ENCODE measurements at regions of chr7 and their contacts with region 1.

Region 1: GRCh38 chr7:87506246-87507180 is 31.0 kb upstream of the ABCB4 start:
- DNase-seq: peak; percentile 5
- H3K4me3 ChIP-seq: no peak overlapping the region
- H3K27ac ChIP-seq: no peak overlapping the region
- H3K4me1 ChIP-seq: no peaks in the 10 kb centered on the region
- H3K27me3 ChIP-seq: peaks cover 2% of the 10 kb centered on the region
- CTCF ChIP-seq: peak; percentile 54 to 58

Region 2: GRCh38 chr7:87411186-87411585 is 95.3 kb before region 1 on chr7:
- CTCF ChIA-PET with region 1: no interaction called
- dilution Hi-C with region 1: no loop called
- in situ Hi-C with region 1: no loop called
- intact Hi-C with region 1: no loop called
- DNase-seq: no peak
- H3K4me3 ChIP-seq: no peak overlapping the region
- H3K27ac ChIP-seq: no peak overlapping the region
- H3K4me1 ChIP-seq: no peaks in the 10 kb centered on the region
- H3K27me3 ChIP-seq: no peaks in the 10 kb centered on the region
- CTCF ChIP-seq: no peak

Region 3: GRCh38 chr7:87608443-87608842 is 101.9 kb after region 1 on chr7:
- CTCF ChIA-PET with region 1: no interaction called
- dilution Hi-C with region 1: no loop called
- in situ Hi-C with region 1: no loop called
- intact Hi-C with region 1: loop called (anchors 5 kb)
- DNase-seq: no peak
- H3K4me3 ChIP-seq: no peak overlapping the region
- H3K27ac ChIP-seq: no peak overlapping the region
- H3K4me1 ChIP-seq: no peaks in the 10 kb centered on the region
- H3K27me3 ChIP-seq: peaks cover 3% of the 10 kb centered on the region
- CTCF ChIP-seq: no peak

Region 4: DNA sequence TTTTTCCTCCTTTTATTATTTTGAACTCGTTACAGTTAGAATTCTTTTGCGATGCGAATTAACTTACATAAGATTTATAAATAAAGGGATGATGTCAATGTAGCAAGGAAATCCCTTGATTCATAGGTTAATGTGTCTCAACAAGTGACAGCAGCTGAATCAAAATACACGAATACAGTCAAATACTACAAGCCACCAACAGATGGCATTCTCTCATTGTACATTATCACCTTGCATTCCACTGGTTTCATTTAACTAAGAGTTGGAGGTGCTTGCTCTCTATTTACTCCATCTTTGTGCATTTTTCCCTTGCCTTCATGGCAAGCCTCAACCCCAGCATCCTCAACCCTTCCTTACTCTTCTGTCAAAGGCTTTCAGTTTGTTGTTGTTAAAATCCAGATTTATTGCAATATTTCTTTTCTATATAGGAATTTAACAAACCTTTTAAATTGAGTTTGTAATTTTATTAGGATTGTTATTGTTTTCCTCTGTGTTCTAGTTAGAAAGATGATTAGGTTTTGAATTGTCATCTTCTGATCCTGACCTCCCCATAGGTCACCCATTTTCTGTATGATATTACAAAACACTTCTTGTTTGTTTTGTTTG is 291.4 kb after region 1 on chr7:
- CTCF ChIA-PET with region 1: no interaction called
- dilution Hi-C with region 1: no loop called
- in situ Hi-C with region 1: no loop called
- intact Hi-C with region 1: loop called (anchors 1 kb)
- DNase-seq: peak; percentile 68
- H3K4me3 ChIP-seq: no peak overlapping the region
- H3K27ac ChIP-seq: no peak overlapping the region
- H3K4me1 ChIP-seq: no peaks in the 10 kb centered on the region
- H3K27me3 ChIP-seq: no peaks in the 10 kb centered on the region
- CTCF ChIP-seq: peak; percentile 62 to 70

Region 5: DNA sequence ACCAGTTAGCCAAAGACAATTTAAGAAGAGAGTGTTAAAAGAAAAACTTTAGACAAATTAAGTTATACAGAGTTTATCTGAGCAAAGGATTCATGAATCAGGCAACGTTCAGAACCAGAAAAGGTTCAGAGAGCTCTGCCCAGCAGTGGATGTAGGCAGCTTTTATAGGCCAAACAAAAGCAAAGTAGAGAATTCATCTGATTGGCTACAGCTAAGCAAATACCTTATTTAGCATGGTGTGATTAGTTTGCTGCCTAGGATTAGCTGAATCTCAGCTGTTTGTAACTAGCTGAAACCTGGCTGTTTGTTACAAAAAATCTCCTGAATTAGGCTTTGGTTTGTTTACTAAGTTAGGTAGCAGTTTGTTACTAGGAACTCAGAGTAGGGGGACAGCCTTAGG is 303.6 kb after region 1 on chr7:
- CTCF ChIA-PET with region 1: no interaction called
- dilution Hi-C with region 1: no loop called
- in situ Hi-C with region 1: no loop called
- intact Hi-C with region 1: no loop called
- DNase-seq: no peak
- H3K4me3 ChIP-seq: no peak overlapping the region
- H3K27ac ChIP-seq: no peak overlapping the region
- H3K4me1 ChIP-seq: no peaks in the 10 kb centered on the region
- H3K27me3 ChIP-seq: no peaks in the 10 kb centered on the region
- CTCF ChIP-seq: no peak

Region 6: DNA sequence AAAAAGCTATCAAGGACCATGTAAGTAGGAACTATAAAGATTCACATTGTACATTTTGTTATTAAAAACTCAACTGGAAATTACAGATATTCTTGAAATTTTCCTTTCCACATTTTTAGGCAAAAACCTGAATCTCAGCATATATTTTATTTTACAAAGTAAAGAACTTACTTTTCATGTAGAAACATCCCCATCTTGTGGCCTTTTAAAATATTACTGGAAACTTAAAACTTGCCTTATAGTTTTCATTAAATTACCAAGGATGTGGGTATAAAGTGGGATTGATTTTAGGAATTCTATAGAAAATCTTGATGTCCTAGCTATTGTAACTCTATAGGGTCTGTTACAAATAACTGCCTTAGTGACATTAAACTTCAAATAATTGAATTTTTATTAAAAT is 380.4 kb after region 1 on chr7:
- CTCF ChIA-PET with region 1: interaction called, 9 read pairs
- dilution Hi-C with region 1: no loop called
- in situ Hi-C with region 1: loop called (anchors 10 to 25 kb)
- intact Hi-C with region 1: loop called (anchors 2 kb)
- DNase-seq: peak; percentile 7
- H3K4me3 ChIP-seq: no peak overlapping the region
- H3K27ac ChIP-seq: no peak overlapping the region
- H3K4me1 ChIP-seq: no peaks in the 10 kb centered on the region
- H3K27me3 ChIP-seq: no peaks in the 10 kb centered on the region
- CTCF ChIP-seq: peak; percentile 30 to 41

Region 7: DNA sequence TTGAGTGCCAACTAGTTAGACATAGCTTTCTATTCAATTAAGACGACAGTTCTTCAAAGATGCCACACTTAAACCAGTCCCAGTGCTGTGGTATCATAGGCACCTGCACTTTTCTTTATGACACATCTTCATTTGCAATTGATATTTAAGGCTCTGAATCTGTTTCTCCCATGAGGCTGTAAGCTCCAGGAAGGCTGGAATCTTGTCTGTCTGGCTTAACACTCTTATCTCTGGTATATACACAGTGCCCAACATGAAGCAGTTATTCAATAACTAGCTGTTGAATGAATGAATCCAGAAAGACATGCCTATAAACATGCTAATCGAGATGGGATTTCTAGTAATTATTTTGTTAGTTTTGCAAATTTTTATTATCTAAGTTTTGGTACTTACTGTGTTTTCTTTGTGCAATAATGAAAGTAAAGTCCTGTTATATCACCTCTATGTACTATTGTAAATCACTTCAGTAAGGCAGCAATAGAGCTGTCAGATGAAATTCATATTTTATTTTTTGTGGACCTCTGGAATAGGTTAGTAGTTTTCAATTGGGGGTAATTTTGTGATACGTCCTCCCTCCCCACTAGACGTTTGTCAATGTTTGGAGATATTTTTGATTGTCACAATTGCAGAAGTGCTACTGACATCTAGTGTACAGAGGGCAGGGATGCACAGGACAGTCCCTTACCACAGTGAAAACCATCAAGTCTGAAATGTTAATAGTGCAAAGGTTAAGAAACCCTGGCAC is 851.4 kb after region 1 on chr7:
- CTCF ChIA-PET with region 1: no interaction called
- dilution Hi-C with region 1: no loop called
- in situ Hi-C with region 1: no loop called
- intact Hi-C with region 1: loop called (anchors 10 kb)
- DNase-seq: peak; percentile 36
- H3K4me3 ChIP-seq: peak overlapping the region in 2 of 3 experiments; percentile 6 to 18
- H3K27ac ChIP-seq: peak overlapping the region; percentile 25
- H3K4me1 ChIP-seq: peaks cover 6% of the 10 kb centered on the region
- H3K27me3 ChIP-seq: no peaks in the 10 kb centered on the region
- CTCF ChIP-seq: peak; percentile 72 to 82